ENCODE measurements at regions of chr1 and their contacts with region 1.

Region 1: DNA sequence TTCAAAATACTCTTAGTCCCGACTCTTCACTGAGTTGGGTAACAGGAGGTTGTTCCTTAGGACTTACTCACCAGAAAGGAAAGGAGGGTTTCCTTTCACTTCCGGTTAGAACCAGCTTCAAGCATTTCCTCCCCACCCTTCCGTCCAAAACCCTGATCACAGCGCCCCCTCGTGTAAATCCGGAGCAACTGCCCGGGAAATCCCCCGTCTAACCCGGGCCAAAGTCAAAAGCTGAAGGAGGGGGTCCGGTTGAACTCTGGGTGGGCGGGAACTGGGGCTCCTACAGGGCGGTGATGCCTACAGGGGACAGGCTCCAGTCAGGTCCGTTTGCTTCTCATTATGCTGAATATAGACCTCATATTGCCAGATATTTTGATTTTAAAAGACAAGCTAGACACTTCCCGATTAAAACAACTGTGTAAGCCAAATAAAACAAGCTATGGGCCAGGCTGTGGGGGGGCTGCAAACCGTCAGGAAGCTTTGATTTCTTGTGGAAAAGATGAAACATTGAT is 15.0 kb upstream of the MTARC2 start:
- DNase-seq: peak; percentile 94
- ATAC-seq: peak; percentile 52
- H3K4me3 ChIP-seq: peak overlapping the region; percentile 56
- H3K27ac ChIP-seq: 0 out of 2 replicates have a peak overlapping the region, but pooled peaks have one; percentile 43
- H3K4me1 ChIP-seq: peaks cover 25% of the 10 kb centered on the region
- H3K27me3 ChIP-seq: no peaks in the 10 kb centered on the region
- CTCF ChIP-seq: peak; percentile 94

Region 2: DNA sequence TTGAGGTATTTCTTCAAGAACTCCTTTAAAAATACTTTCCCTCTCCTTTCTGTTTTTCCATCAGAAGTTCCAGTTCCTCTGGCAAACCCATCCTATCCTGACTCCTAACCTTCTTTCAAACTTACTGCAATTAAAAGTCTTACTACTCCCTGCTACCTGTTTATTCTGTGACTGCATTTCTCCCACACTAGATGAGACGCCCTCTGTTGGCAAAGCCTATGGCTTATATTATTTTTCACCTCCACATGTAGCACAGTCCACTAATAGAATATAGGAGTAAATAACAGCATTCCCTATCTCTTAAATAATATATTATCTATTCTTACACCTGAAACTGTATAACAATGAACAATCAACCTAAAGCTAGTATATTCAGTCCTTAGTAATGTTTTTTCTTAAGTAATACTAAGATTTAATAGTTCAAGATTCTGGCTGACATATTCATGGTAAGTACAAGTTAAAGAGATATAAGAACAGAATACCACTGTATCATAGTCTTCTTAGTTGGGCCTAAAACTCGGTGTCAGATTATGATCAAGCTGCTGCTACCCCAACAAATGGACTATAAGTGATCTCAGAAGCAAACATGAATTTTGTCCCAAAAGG is 515.7 kb before region 1 on chr1:
- CTCF ChIA-PET with region 1: no interaction called
- POLR2A ChIA-PET with region 1: no interaction called
- intact Hi-C with region 1: loop called (anchors 5 kb)
- DNase-seq: peak; percentile 68
- ATAC-seq: peak; percentile 77
- H3K4me3 ChIP-seq: no peak overlapping the region
- H3K27ac ChIP-seq: no peak overlapping the region
- H3K4me1 ChIP-seq: no peaks in the 10 kb centered on the region
- H3K27me3 ChIP-seq: no peaks in the 10 kb centered on the region
- CTCF ChIP-seq: peak; percentile 94

Region 3: GRCh38 chr1:220294846-220295301 is 438.3 kb before region 1 on chr1:
- CTCF ChIA-PET with region 1: interaction called, 13 read pairs
- POLR2A ChIA-PET with region 1: no interaction called
- intact Hi-C with region 1: no loop called
- DNase-seq: peak; percentile 33
- ATAC-seq: no peak
- H3K4me3 ChIP-seq: no peak overlapping the region
- H3K27ac ChIP-seq: no peak overlapping the region
- H3K4me1 ChIP-seq: no peaks in the 10 kb centered on the region
- H3K27me3 ChIP-seq: peaks cover 45% of the 10 kb centered on the region
- CTCF ChIP-seq: no peak

Region 4: DNA sequence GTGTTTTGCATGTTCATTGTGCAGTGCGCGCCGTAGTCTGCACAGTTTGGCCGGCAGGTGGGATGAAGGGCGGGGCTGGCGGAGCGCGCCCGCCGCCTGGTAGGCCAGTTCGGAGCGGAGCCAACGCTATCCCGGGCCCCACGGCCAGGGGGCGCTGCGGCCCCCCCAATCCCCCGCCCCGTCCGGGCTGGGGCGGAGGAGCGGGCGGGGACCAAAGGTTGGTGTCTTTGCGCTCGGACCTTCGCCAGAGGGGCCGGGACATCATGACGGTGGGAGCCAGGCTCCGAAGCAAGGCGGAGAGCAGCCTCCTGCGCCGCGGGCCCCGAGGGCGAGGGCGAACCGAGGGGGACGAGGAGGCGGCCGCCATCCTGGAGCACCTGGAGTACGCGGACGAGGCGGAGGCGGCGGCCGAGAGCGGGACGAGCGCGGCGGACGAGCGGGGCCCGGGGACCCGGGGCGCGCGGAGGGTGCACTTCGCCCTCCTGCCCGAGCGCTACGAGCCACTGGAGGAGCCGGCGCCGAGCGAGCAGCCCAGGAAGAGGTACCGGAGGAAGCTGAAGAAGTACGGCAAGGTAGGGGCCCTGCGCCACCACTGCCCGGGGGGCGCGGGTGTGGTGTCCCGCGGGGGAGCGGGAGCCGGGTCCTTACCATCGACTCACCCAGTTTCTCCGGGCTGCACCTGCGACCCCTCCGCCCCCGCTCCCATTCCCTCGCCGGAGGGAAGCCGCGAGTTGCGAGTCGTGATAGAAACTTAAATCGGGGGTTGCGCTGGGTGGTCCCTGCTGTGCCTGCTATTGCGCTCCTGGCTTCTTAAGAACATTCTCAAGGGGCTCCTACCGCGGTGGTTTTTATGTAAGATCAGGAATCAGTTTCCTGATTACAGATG is 42.8 kb before region 1 on chr1 and contains the start of gene C1orf115:
- CTCF ChIA-PET with region 1: interaction called, 10 read pairs
- POLR2A ChIA-PET with region 1: interaction called, 11 read pairs
- intact Hi-C with region 1: loop called (anchors 1 kb)
- DNase-seq: peak; percentile 95
- ATAC-seq: peak; percentile 81
- H3K4me3 ChIP-seq: peak within 1 kb of the TSS; percentile 82
- H3K27ac ChIP-seq: no peak within 1 kb of the TSS
- H3K4me1 ChIP-seq: peaks cover 7% of the 10 kb centered on the region; the same call in 1 of the 2 replicates
- H3K27me3 ChIP-seq: no peaks in the 10 kb centered on the region
- CTCF ChIP-seq: peak; percentile 96
- total RNA-seq, gene C1orf115: 5.9 and 6.3 TPM in 2 replicates

Region 5: DNA sequence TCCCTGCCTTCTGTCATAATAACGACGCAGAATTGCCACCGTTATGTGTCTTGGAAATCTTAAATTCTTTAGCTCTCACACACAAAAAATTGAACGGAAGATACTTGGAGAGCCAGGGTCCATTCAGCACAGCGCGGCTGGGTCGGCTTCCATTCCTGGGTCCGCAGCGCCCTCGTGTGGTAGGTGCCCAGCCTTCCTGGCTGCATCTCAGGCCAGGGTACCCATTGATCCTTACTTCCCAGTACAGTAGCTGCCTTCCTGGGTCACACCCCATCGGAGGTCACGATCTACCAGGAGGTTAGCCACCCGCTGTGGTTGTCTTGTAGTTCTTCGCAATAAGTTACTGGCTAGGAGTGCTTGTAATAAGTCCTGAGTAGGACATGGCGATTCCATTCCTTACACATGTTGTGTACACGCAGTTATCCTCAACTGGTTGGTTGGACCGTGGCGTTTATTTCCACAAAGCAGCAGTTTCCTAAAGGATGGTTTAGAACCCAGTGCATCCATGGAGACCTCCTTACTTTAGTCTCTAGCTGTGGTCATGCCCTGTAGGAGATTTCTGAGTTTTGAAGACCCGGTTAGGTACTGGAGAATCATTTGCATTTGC is 43.7 kb after region 1 on chr1:
- CTCF ChIA-PET with region 1: interaction called, 7 read pairs
- POLR2A ChIA-PET with region 1: no interaction called
- intact Hi-C with region 1: loop called (anchors 1 kb)
- DNase-seq: peak; percentile 85
- ATAC-seq: peak; percentile 99
- H3K4me3 ChIP-seq: no peak overlapping the region
- H3K27ac ChIP-seq: no peak overlapping the region
- H3K4me1 ChIP-seq: no peaks in the 10 kb centered on the region
- H3K27me3 ChIP-seq: no peaks in the 10 kb centered on the region
- CTCF ChIP-seq: peak; percentile 98